Mammary epithelial cell (primary cell): ENCODE measurements at regions of chr20 and their contacts with region 1.

Region 1: GRCh38 chr20:56574531-56575142 is 41.6 kb downstream of the FAM209B start:
- DNase-seq: peak; percentile 35
- H3K4me3 ChIP-seq: no peak overlapping the region
- H3K27ac ChIP-seq: no peak overlapping the region
- H3K4me1 ChIP-seq: peaks cover 13% of the 10 kb centered on the region
- H3K27me3 ChIP-seq: no peaks in the 10 kb centered on the region
- CTCF ChIP-seq: no peak

Region 2: GRCh38 chr20:56187534-56188198 is 387.0 kb before region 1 on chr20:
- CTCF ChIA-PET with region 1: no interaction called
- dilution Hi-C with region 1: no loop called
- in situ Hi-C with region 1: no loop called
- intact Hi-C with region 1: loop called (anchors 5 kb)
- DNase-seq: peak; percentile 21
- H3K4me3 ChIP-seq: no peak overlapping the region
- H3K27ac ChIP-seq: no peak overlapping the region
- H3K4me1 ChIP-seq: no peaks in the 10 kb centered on the region
- H3K27me3 ChIP-seq: no peaks in the 10 kb centered on the region
- CTCF ChIP-seq: peak; percentile 38 to 60

Region 3: GRCh38 chr20:56202493-56203077 is 372.1 kb before region 1 on chr20:
- CTCF ChIA-PET with region 1: no interaction called
- dilution Hi-C with region 1: no loop called
- in situ Hi-C with region 1: no loop called
- intact Hi-C with region 1: loop called (anchors 2 kb)
- DNase-seq: peak; percentile 23
- H3K4me3 ChIP-seq: no peak overlapping the region
- H3K27ac ChIP-seq: no peak overlapping the region
- H3K4me1 ChIP-seq: peaks cover 5% of the 10 kb centered on the region
- H3K27me3 ChIP-seq: no peaks in the 10 kb centered on the region
- CTCF ChIP-seq: peak; percentile 76 to 81

Region 4: DNA sequence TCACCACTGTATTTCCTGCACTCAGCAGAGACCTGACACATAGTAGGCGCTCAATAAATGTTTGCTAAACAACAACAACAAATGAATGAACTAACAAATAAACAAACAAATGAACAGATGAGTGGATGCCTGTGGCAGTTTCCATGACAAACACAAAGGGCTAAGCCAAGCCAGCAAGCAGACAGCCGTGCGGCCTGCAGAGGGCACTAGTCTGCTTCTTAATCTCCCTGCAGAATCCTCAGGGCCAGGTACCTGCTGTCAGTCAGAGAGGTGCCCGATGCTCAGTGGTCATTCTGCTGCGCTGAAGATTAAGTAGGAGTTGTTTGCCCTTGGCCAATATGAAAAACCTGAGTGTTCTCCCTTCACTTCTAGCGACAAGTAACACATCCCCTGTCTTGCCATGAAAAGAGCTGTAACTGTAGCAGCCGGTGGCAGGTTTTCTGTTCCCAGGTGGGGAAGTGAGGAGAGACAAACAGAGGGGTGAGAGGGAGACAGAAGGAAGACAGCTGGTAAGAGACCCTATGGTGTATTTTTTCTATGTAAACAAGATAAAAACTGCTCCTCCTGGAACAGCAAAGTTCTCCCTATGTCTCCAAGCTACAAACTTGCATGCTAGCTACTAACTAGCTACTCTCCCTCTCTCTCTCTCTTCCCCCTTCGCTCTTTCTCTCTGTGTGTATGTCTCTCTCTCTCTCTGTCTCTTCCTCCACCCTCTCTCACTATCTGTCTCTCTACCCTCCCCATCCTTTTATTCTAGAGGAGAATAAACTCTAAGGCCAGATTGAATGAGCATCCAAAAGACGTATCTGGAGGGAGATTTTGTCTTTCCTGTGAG is 326.5 kb before region 1 on chr20 and contains the start of gene MC3R:
- CTCF ChIA-PET with region 1: no interaction called
- dilution Hi-C with region 1: no loop called
- in situ Hi-C with region 1: no loop called
- intact Hi-C with region 1: loop called (anchors 2 kb)
- DNase-seq: peak; percentile 39
- H3K4me3 ChIP-seq: no peak within 1 kb of the TSS
- H3K27ac ChIP-seq: no peak within 1 kb of the TSS
- H3K4me1 ChIP-seq: peaks cover 8% of the 10 kb centered on the region
- H3K27me3 ChIP-seq: peaks cover 16% of the 10 kb centered on the region
- CTCF ChIP-seq: peak; percentile 91 to 96
- total RNA-seq, gene MC3R: not detected

Region 5: GRCh38 chr20:56400090-56400542 is 174.5 kb before region 1 on chr20:
- CTCF ChIA-PET with region 1: no interaction called
- dilution Hi-C with region 1: no loop called
- in situ Hi-C with region 1: no loop called
- intact Hi-C with region 1: loop called (anchors 1 kb)
- DNase-seq: peak; percentile 34
- H3K4me3 ChIP-seq: no peak overlapping the region
- H3K27ac ChIP-seq: no peak overlapping the region
- H3K4me1 ChIP-seq: no peaks in the 10 kb centered on the region
- H3K27me3 ChIP-seq: no peaks in the 10 kb centered on the region
- CTCF ChIP-seq: peak; percentile 82 to 88

Region 6: GRCh38 chr20:56974499-56975236 is 400.0 kb after region 1 on chr20:
- CTCF ChIA-PET with region 1: no interaction called
- dilution Hi-C with region 1: no loop called
- in situ Hi-C with region 1: no loop called
- intact Hi-C with region 1: loop called (anchors 1 kb)
- DNase-seq: peak; percentile 55
- H3K4me3 ChIP-seq: no peak overlapping the region
- H3K27ac ChIP-seq: no peak overlapping the region
- H3K4me1 ChIP-seq: no peaks in the 10 kb centered on the region
- H3K27me3 ChIP-seq: peaks cover 3% of the 10 kb centered on the region
- CTCF ChIP-seq: peak; percentile 86

Region 7: DNA sequence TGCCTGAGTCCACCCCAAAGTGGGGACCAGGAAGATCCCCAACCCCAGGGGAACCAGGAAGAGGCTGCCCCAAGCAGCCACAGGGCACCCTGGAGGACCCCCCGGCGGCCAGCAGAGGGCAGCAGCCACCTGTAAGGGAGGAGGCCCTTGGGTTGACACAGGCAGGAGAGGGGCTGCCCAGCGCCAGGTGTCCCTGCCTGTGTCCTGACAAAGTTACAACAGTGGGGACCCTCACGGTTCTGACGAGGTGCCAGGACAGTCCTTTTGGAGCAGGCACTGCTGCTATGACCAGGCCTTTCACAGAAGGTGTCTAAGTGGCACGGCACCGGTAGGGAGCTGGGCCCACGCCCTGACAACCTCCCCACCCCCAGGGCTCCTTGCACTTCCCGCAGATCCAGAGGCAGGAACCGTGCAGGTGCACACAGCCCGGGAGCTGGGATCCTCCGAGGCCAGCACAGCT is 515.1 kb after region 1 on chr20:
- CTCF ChIA-PET with region 1: no interaction called
- dilution Hi-C with region 1: no loop called
- in situ Hi-C with region 1: no loop called
- intact Hi-C with region 1: no loop called
- DNase-seq: peak; percentile 33
- H3K4me3 ChIP-seq: no peak overlapping the region
- H3K27ac ChIP-seq: no peak overlapping the region
- H3K4me1 ChIP-seq: no peaks in the 10 kb centered on the region
- H3K27me3 ChIP-seq: no peaks in the 10 kb centered on the region
- CTCF ChIP-seq: peak; percentile 75 to 98